CD8-positive, alpha-beta memory T cell (primary cell): ENCODE measurements at regions of chr1 and their contacts with region 1.

Region 1: GRCh38 chr1:152001391-152002249 is 8.0 kb upstream of the S100A10 start:
- DNase-seq: peak; percentile 61 to 82 (median 67)
- H3K4me3 ChIP-seq: no peak overlapping the region
- H3K4me3 Mint-ChIP-seq: no peak overlapping the region
- H3K27ac ChIP-seq: no peak overlapping the region
- H3K27ac Mint-ChIP-seq: peak overlapping the region in 1 of 8 donors; percentile 77
- H3K4me1 ChIP-seq: no peaks in the 10 kb centered on the region
- H3K4me1 Mint-ChIP-seq: peaks cover 0 to 5% (median 2%) of the 10 kb centered on the region in 3 donors
- H3K27me3 ChIP-seq: no peaks in the 10 kb centered on the region
- H3K27me3 Mint-ChIP-seq: peaks cover 6 to 11% of the 10 kb centered on the region in 2 donors

Region 2: DNA sequence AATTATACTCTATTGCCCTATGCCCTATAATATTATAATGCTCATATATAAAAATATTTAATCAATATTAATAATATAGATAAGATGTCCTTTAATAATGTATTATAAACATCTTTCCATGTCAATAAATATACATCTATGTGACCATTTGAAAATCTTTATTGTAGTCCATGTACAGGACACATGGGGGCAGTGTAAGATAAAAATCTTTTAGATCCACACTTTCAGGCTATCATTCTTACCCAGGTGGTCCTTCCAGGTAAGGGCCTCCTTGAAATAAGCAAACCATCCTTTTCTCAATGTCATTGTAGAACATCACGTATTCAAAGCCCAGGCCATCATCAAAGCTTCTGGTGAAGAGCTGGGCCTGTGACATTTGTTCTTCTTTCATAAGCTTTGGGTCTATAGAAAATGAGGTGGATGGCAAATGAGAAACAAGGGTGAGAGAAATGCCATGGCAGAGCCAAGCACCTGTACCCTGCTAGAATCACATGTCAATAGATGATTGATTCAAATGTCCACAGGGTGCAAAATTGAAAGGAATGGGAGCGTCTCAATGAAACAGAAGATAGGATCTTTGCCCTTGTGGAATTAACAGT is 112.5 kb before region 1 on chr1:
- CTCF ChIA-PET with region 1: interaction called, 33 read pairs
- POLR2A ChIA-PET with region 1: no interaction called
- DNase-seq: peak in 2 of 5 donors; percentile 24 to 37
- H3K4me3 ChIP-seq: no peak overlapping the region
- H3K4me3 Mint-ChIP-seq: no peak overlapping the region
- H3K27ac ChIP-seq: no peak overlapping the region
- H3K27ac Mint-ChIP-seq: peak overlapping the region in 5 of 8 donors; percentile 15 to 52 (median 23)
- H3K4me1 ChIP-seq: peaks cover 13% of the 10 kb centered on the region
- H3K4me1 Mint-ChIP-seq: peaks cover 21 to 36% (median 25%) of the 10 kb centered on the region in 3 donors
- H3K27me3 ChIP-seq: no peaks in the 10 kb centered on the region
- H3K27me3 Mint-ChIP-seq: no peaks in the 10 kb centered on the region

Region 3: GRCh38 chr1:151945725-151946364 is 55.8 kb before region 1 on chr1:
- CTCF ChIA-PET with region 1: interaction called, 153 read pairs
- POLR2A ChIA-PET with region 1: no interaction called
- DNase-seq: peak; percentile 39 to 96 (median 85)
- H3K4me3 ChIP-seq: peak overlapping the region; percentile 4
- H3K4me3 Mint-ChIP-seq: peak overlapping the region; percentile 19 to 75 (median 57)
- H3K27ac ChIP-seq: peak overlapping the region; percentile 84
- H3K27ac Mint-ChIP-seq: peak overlapping the region; percentile 90 to 99 (median 94)
- H3K4me1 ChIP-seq: peaks cover 26% of the 10 kb centered on the region
- H3K4me1 Mint-ChIP-seq: peaks cover 43 to 51% (median 45%) of the 10 kb centered on the region in 3 donors
- H3K27me3 ChIP-seq: no peaks in the 10 kb centered on the region
- H3K27me3 Mint-ChIP-seq: no peaks in the 10 kb centered on the region

Region 4: DNA sequence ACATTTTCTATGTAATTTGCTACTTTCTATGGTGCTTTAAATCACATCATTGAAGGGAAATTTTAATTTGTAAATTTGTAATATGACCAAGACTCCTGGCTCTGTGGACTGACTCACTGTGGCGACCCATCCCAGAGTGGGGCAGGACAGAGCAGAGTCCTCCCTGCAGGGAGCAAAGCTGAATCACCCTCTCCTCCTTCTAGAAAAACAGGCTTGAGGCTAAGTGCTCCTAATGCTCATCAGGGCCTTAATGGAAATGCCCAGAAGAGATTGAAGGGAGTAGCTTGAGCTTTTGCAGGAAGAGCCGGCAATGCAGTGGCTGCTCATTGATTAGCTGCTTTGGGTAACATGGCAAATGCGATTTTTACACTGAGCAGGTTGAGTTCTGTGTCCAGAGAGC is 24.8 kb before region 1 on chr1:
- CTCF ChIA-PET with region 1: interaction called, 339 read pairs
- POLR2A ChIA-PET with region 1: no interaction called
- DNase-seq: no peak
- H3K4me3 ChIP-seq: no peak overlapping the region
- H3K4me3 Mint-ChIP-seq: no peak overlapping the region
- H3K27ac ChIP-seq: no peak overlapping the region
- H3K27ac Mint-ChIP-seq: no peak overlapping the region
- H3K4me1 ChIP-seq: no peaks in the 10 kb centered on the region
- H3K4me1 Mint-ChIP-seq: peaks cover 7 to 19% (median 15%) of the 10 kb centered on the region in 3 donors
- H3K27me3 ChIP-seq: no peaks in the 10 kb centered on the region
- H3K27me3 Mint-ChIP-seq: no peaks in the 10 kb centered on the region

Region 5: GRCh38 chr1:152013664-152014237 is 12.1 kb after region 1 on chr1:
- CTCF ChIA-PET with region 1: interaction called, 41 read pairs
- POLR2A ChIA-PET with region 1: no interaction called
- DNase-seq: no peak
- H3K4me3 ChIP-seq: no peak overlapping the region
- H3K4me3 Mint-ChIP-seq: no peak overlapping the region
- H3K27ac ChIP-seq: no peak overlapping the region
- H3K27ac Mint-ChIP-seq: peak overlapping the region in 1 of 8 donors; percentile 24
- H3K4me1 ChIP-seq: no peaks in the 10 kb centered on the region
- H3K4me1 Mint-ChIP-seq: peaks cover 3 to 5% (median 4%) of the 10 kb centered on the region in 3 donors
- H3K27me3 ChIP-seq: no peaks in the 10 kb centered on the region
- H3K27me3 Mint-ChIP-seq: peaks cover 11 to 64% of the 10 kb centered on the region in 2 donors